PC-9 (cell line): ENCODE measurements at regions of chr17 and their contacts with region 1.

Region 1: GRCh38 chr17:65039336-65039988 is 17.1 kb downstream of the GNA13 start:
- DNase-seq: peak; percentile 35 to 87
- H3K4me3 ChIP-seq: no peak overlapping the region
- H3K27ac ChIP-seq: peak overlapping the region; percentile 45
- H3K4me1 ChIP-seq: peaks cover 17% of the 10 kb centered on the region
- H3K27me3 ChIP-seq: no peaks in the 10 kb centered on the region
- CTCF ChIP-seq: no peak

Region 2: GRCh38 chr17:64765191-64765958 is 274.1 kb before region 1 on chr17:
- CTCF ChIA-PET with region 1: interaction called, 17 read pairs
- POLR2A ChIA-PET with region 1: no interaction called
- intact Hi-C with region 1: no loop called
- DNase-seq: peak in 1 of 2 experiments; percentile 71
- H3K4me3 ChIP-seq: no peak overlapping the region
- H3K27ac ChIP-seq: peak overlapping the region; percentile 35; the same call in 1 of the 2 replicates
- H3K4me1 ChIP-seq: peaks cover 15% of the 10 kb centered on the region
- H3K27me3 ChIP-seq: no peaks in the 10 kb centered on the region
- CTCF ChIP-seq: no peak

Region 3: GRCh38 chr17:65008882-65009281 is 30.6 kb before region 1 on chr17:
- CTCF ChIA-PET with region 1: no interaction called
- POLR2A ChIA-PET with region 1: interaction called, 26 read pairs
- intact Hi-C with region 1: no loop called
- DNase-seq: no peak
- H3K4me3 ChIP-seq: no peak overlapping the region
- H3K27ac ChIP-seq: no peak overlapping the region
- H3K4me1 ChIP-seq: peaks cover 9% of the 10 kb centered on the region
- H3K27me3 ChIP-seq: no peaks in the 10 kb centered on the region
- CTCF ChIP-seq: no peak

Region 4: DNA sequence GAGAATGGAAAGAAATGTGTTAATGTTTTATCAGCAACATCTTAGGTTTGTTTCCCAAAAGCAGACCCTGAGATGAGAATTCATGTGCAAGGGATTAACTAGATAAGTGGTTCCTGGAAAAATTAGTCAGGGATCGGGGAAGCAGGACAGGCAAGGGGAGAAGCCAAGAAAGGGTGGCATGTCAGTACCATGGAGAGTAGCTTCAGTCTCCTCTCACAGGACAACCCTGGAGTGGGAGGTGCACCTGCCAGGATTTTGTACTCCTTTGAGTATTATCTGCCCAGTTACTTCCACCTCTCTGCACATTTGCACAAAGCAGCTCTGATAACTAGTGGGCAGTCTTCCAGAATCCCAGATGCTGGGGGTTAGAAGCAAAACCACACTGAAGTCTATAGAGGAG is 214.7 kb after region 1 on chr17:
- CTCF ChIA-PET with region 1: no interaction called
- POLR2A ChIA-PET with region 1: no interaction called
- intact Hi-C with region 1: no loop called
- DNase-seq: no peak
- H3K4me3 ChIP-seq: no peak overlapping the region
- H3K27ac ChIP-seq: no peak overlapping the region
- H3K4me1 ChIP-seq: no peaks in the 10 kb centered on the region
- H3K27me3 ChIP-seq: peaks cover 65% of the 10 kb centered on the region
- CTCF ChIP-seq: no peak